CD8-positive, alpha-beta T cell (primary cell): ENCODE measurements at regions of chr4 and their contacts with region 1.

Region 1: DNA sequence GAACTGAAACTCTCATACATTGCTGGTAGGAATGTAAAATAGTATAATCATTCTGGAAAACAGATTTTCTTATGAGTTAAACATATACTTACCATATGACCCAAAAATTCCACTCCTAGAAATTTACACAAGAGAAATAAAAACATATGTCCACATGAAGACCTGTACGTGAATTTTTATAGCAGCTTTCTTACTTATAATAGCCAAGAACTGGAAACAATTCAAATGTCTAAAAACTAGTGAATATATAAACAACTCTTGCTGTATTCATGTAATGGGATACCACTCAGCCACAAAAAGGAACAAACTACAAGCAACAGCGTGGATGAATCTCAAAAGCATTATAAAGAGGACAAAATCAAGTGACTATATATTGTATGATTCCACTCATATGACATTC is 27.5 kb downstream of the TMEM156 start:
- DNase-seq: no peak
- ATAC-seq: no peak
- H3K4me3 ChIP-seq: no peak overlapping the region
- H3K4me3 Mint-ChIP-seq: no peak overlapping the region
- H3K27ac ChIP-seq: no peak overlapping the region
- H3K27ac Mint-ChIP-seq: no peak overlapping the region
- H3K4me1 ChIP-seq: no peaks in the 10 kb centered on the region
- H3K4me1 Mint-ChIP-seq: peaks cover 16% of the 10 kb centered on the region
- H3K27me3 ChIP-seq: no peaks in the 10 kb centered on the region
- H3K27me3 Mint-ChIP-seq: no peaks in the 10 kb centered on the region
- CTCF ChIP-seq: no peak

Region 2: GRCh38 chr4:39025552-39026085 is 20.9 kb after region 1 on chr4:
- CTCF ChIA-PET with region 1: no interaction called
- POLR2A ChIA-PET with region 1: no interaction called
- intact Hi-C with region 1: loop called (anchors 2 kb)
- DNase-seq: no peak
- ATAC-seq: no peak
- H3K4me3 ChIP-seq: no peak overlapping the region
- H3K4me3 Mint-ChIP-seq: no peak overlapping the region
- H3K27ac ChIP-seq: no peak overlapping the region
- H3K27ac Mint-ChIP-seq: no peak overlapping the region
- H3K4me1 ChIP-seq: peaks cover 28% of the 10 kb centered on the region
- H3K4me1 Mint-ChIP-seq: peaks cover 34% of the 10 kb centered on the region
- H3K27me3 ChIP-seq: no peaks in the 10 kb centered on the region
- H3K27me3 Mint-ChIP-seq: no peaks in the 10 kb centered on the region
- CTCF ChIP-seq: no peak

Region 3: GRCh38 chr4:39032218-39033085 is 27.7 kb after region 1 on chr4 and contains the start of gene TMEM156:
- CTCF ChIA-PET with region 1: interaction called, 4 read pairs
- POLR2A ChIA-PET with region 1: no interaction called
- intact Hi-C with region 1: loop called (anchors 2 kb)
- DNase-seq: peak in 2 of 9 experiments; percentile 67 to 86
- ATAC-seq: peak; percentile 88
- H3K4me3 ChIP-seq: peak within 1 kb of the TSS; percentile 43 to 49
- H3K4me3 Mint-ChIP-seq: peak within 1 kb of the TSS; percentile 83
- H3K27ac ChIP-seq: peak within 1 kb of the TSS; percentile 30 to 69
- H3K27ac Mint-ChIP-seq: peak within 1 kb of the TSS; percentile 90
- H3K4me1 ChIP-seq: peaks cover 49% of the 10 kb centered on the region
- H3K4me1 Mint-ChIP-seq: peaks cover 39% of the 10 kb centered on the region
- H3K27me3 ChIP-seq: no peaks in the 10 kb centered on the region
- H3K27me3 Mint-ChIP-seq: no peaks in the 10 kb centered on the region
- CTCF ChIP-seq: no peak
- total RNA-seq, gene TMEM156: 8.4 to 9.4 TPM

Region 4: GRCh38 chr4:39067451-39067850 is 62.7 kb after region 1 on chr4:
- CTCF ChIA-PET with region 1: no interaction called
- POLR2A ChIA-PET with region 1: no interaction called
- intact Hi-C with region 1: loop called (anchors 5 kb)
- DNase-seq: no peak
- ATAC-seq: no peak
- H3K4me3 ChIP-seq: no peak overlapping the region
- H3K4me3 Mint-ChIP-seq: no peak overlapping the region
- H3K27ac ChIP-seq: no peak overlapping the region
- H3K27ac Mint-ChIP-seq: no peak overlapping the region
- H3K4me1 ChIP-seq: no peaks in the 10 kb centered on the region
- H3K4me1 Mint-ChIP-seq: peaks cover 8% of the 10 kb centered on the region
- H3K27me3 ChIP-seq: no peaks in the 10 kb centered on the region
- H3K27me3 Mint-ChIP-seq: no peaks in the 10 kb centered on the region
- CTCF ChIP-seq: no peak

Region 5: GRCh38 chr4:39514888-39515401 is 510.2 kb after region 1 on chr4:
- CTCF ChIA-PET with region 1: no interaction called
- POLR2A ChIA-PET with region 1: no interaction called
- intact Hi-C with region 1: no loop called
- DNase-seq: no peak
- ATAC-seq: no peak
- H3K4me3 ChIP-seq: no peak overlapping the region
- H3K4me3 Mint-ChIP-seq: no peak overlapping the region
- H3K27ac ChIP-seq: no peak overlapping the region
- H3K27ac Mint-ChIP-seq: no peak overlapping the region
- H3K4me1 ChIP-seq: no peaks in the 10 kb centered on the region
- H3K4me1 Mint-ChIP-seq: no peaks in the 10 kb centered on the region
- H3K27me3 ChIP-seq: no peaks in the 10 kb centered on the region
- H3K27me3 Mint-ChIP-seq: no peaks in the 10 kb centered on the region
- CTCF ChIP-seq: no peak